Gastrocnemius medialis (tissue), 4 donors: ENCODE measurements at regions of chr12 and their contacts with region 1.

Region 1: DNA sequence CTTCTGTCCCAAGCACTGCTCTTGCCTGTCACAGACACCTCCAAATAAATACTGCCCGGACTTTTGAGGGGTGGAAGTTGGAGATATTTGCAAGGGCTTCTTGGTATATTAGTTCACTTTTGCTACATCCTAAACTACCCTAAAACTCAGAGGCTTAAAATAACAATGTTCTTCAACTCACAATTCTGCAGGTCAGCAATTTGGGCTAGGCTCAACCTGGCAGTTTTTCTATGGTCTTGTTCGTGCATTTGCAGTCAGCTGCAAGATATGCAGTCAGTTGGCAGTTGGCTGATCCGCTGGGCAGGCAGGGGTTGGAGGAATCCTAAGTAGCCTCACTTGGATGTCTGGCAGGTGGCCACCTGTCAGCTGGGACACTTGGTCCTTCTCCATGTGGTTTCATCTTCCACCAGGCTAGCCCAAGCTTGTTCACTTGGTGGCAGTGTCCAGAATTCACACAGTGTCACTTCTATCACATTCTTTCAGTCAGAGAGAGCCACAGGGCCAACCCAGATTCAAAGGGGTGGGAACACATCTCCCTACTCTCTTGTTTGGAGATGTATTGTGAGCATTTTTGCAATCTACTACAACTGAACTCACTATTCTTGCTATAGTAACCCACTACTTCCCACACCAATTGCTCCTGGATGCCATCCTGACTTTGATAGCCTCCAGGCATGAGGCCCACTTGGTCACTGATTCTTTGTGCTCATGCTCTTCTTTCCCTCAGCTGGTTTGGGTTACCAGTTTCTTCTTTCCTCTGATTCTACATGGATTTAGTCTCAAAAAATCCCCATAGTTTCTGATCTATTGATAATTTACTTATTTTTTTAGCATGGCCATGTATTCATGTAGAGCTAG is 27.8 kb upstream of the CAPRIN2 start:
- DNase-seq: peak; percentile 70 to 82
- ATAC-seq: peak; percentile 96 to 97
- H3K4me3 ChIP-seq: no peak overlapping the region
- H3K27ac ChIP-seq: peak overlapping the region; percentile 9 to 63 (median 46)
- H3K4me1 ChIP-seq: peaks cover 9 to 13% of the 10 kb centered on the region in 2 donors
- H3K27me3 ChIP-seq: no peaks in the 10 kb centered on the region
- CTCF ChIP-seq: no peak
- POLR2A ChIP-seq: no peak

Region 2: DNA sequence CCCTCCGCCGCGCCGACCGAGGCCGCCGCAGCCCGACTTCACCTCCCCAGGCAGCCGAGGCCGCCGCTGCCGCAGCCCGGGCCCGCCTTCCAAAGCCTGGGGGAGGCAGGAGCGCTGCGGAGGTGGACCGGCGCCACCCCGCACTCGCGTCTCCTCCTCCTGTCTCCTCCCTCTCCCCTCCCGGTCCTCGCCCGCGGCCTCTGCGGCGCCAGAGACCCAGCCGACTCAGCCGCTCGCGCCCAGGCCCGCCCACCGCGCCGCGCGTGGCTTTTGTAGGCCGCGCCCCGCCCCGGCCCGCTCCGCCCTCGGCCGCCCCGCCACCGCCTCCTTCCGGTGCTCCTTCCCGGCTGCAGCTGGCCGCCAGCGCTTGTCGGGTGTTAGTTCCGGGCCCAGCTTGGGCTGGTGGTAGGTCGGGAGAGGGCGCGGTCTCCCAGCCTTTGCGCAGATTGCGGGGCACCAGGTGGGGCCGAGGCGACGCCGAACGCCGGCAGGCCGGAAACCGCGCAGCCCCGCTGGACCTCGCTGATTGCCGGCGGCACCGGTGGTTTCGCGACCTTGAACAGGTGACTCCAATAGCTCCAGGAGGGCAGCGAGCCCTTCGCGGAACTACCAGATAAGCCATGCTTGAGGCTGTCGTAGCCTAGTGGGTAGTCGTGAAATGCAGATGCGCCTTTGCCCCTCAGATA is 27.7 kb before region 1 on chr12 and contains the start of gene CAPRIN2:
- in situ Hi-C with region 1: no loop called
- intact Hi-C with region 1: loop called (anchors 2 kb)
- DNase-seq: peak; percentile 90 to 94
- ATAC-seq: peak; percentile 93 to 96
- H3K4me3 ChIP-seq: peak within 1 kb of the TSS; percentile 58 to 94 (median 82)
- H3K27ac ChIP-seq: peak within 1 kb of the TSS; percentile 84 to 94 (median 90)
- H3K4me1 ChIP-seq: peaks cover 19 to 21% of the 10 kb centered on the region in 2 donors
- H3K27me3 ChIP-seq: no peaks in the 10 kb centered on the region
- CTCF ChIP-seq: peak in 4 of 5 experiments; percentile 44 to 53 (median 46)
- POLR2A ChIP-seq: peak; percentile 85 to 88
- total RNA-seq, gene CAPRIN2: 6.3 to 21.1 (median 7.2) TPM

Region 3: GRCh38 chr12:32032205-32032810 is 1249.8 kb after region 1 on chr12:
- in situ Hi-C with region 1: no loop called
- intact Hi-C with region 1: no loop called
- DNase-seq: no peak
- ATAC-seq: peak; percentile 51 to 68
- H3K4me3 ChIP-seq: no peak overlapping the region
- H3K27ac ChIP-seq: no peak overlapping the region
- H3K4me1 ChIP-seq: peaks cover 0 to 6% of the 10 kb centered on the region in 2 donors
- H3K27me3 ChIP-seq: no peaks in the 10 kb centered on the region
- CTCF ChIP-seq: no peak
- POLR2A ChIP-seq: no peak